ENCODE measurements at regions of chr3 and their contacts with region 1.

Region 1: GRCh38 chr3:188914552-188914951 is 257.2 kb upstream of the TPRG1 start:
- DNase-seq: peak; percentile 36
- H3K4me3 Mint-ChIP-seq: no peak overlapping the region
- H3K27ac Mint-ChIP-seq: peak overlapping the region; percentile 85
- H3K4me1 Mint-ChIP-seq: peaks cover 47% of the 10 kb centered on the region
- H3K27me3 Mint-ChIP-seq: peaks cover 2% of the 10 kb centered on the region

Region 2: DNA sequence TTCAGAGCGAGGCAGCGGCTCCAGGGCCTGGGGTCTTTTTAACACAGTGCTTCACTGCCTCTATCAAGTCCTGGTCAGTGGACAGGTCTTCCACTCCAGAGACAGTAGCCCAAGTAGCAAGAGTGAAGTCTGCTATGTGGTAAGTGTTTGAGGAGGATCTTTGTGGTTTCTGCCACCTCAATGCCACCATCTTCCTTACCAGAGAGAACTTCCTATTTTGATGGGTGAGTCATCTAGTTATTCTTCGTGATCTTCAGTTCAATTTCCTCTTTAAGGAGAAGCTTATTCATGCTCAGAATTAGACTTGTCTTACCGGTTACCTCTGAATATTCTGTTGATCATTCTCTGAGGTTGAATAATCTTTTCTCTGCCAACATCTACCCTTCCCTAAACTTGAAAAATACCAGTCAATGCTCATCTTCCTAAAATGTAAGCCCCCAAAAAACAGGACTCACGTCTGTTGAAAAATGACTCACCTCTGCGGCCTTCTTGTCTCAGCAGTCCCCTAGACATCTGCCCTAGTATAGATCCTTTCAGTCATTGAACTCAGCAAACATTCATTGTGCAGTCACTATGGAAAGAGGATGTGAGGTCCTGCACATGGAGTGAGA is 1137.1 kb before region 1 on chr3:
- CTCF ChIA-PET with region 1: no interaction called
- intact Hi-C with region 1: loop called (anchors 1 kb)
- DNase-seq: peak; percentile 76
- H3K4me3 Mint-ChIP-seq: peak overlapping the region; percentile 48
- H3K27ac Mint-ChIP-seq: peak overlapping the region; percentile 96
- H3K4me1 Mint-ChIP-seq: peaks cover 31% of the 10 kb centered on the region
- H3K27me3 Mint-ChIP-seq: no peaks in the 10 kb centered on the region

Region 3: DNA sequence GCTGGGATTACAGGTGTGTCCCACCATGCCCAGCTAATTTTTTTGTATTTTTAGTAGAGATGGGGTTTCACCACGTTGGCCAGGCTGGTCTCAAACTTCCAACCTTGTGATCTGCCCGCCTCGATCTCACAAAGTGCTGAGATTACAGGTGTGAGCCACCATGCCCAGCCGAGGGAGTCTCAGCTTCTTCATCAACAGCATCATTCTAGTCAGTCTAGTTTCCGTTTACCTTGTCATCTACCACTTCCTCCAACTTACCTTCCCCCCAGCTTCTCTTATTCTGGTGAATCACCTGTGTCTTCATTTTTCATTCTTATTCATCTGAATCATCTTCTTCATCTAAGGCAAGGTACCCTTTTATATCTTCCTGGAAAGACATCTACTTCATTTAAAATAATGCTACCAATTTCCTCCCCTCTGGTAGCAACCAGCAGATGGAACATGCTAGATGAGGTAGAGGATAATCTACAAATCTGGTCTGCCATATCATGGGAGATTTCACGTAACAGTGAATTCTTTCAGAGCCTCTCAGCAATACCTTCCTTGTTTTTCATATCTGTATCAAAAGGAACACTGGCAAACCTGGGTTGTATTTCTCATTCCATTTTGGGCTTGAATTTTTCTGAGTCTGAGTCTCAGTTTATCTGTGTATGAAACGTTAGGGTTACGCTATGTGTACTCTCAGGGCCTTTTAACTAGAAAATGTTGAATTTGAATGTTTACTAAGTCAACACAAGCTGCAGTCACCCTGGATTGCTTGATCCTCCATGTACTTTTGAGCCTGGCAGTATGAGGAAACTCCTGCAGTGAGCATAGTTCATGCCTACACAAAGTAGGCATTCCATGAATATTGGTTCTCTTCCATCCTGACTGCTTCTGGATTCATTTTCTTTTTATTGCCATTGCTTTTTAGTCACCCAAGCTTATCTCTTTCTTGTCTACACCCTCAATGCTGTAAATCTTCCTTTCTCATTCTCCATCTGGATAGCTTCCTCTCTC is 743.8 kb before region 1 on chr3:
- CTCF ChIA-PET with region 1: no interaction called
- intact Hi-C with region 1: loop called (anchors 1 kb)
- DNase-seq: peak; percentile 89
- H3K4me3 Mint-ChIP-seq: peak overlapping the region; percentile 39
- H3K27ac Mint-ChIP-seq: peak overlapping the region; percentile 86
- H3K4me1 Mint-ChIP-seq: peaks cover 64% of the 10 kb centered on the region
- H3K27me3 Mint-ChIP-seq: no peaks in the 10 kb centered on the region

Region 4: GRCh38 chr3:188339410-188340295 is 574.9 kb before region 1 on chr3:
- CTCF ChIA-PET with region 1: no interaction called
- intact Hi-C with region 1: loop called (anchors 1 kb)
- DNase-seq: peak; percentile 76
- H3K4me3 Mint-ChIP-seq: peak overlapping the region; percentile 59
- H3K27ac Mint-ChIP-seq: peak overlapping the region; percentile 92
- H3K4me1 Mint-ChIP-seq: peaks cover 34% of the 10 kb centered on the region
- H3K27me3 Mint-ChIP-seq: no peaks in the 10 kb centered on the region

Region 5: GRCh38 chr3:188700501-188700900 is 214.1 kb before region 1 on chr3:
- CTCF ChIA-PET with region 1: no interaction called
- intact Hi-C with region 1: loop called (anchors 1 kb)
- DNase-seq: peak; percentile 52
- H3K4me3 Mint-ChIP-seq: no peak overlapping the region
- H3K27ac Mint-ChIP-seq: no peak overlapping the region
- H3K4me1 Mint-ChIP-seq: peaks cover 30% of the 10 kb centered on the region
- H3K27me3 Mint-ChIP-seq: no peaks in the 10 kb centered on the region

Region 6: GRCh38 chr3:189041482-189042090 is 127.0 kb after region 1 on chr3:
- CTCF ChIA-PET with region 1: interaction called, 10 read pairs
- intact Hi-C with region 1: loop called (anchors 1 kb)
- DNase-seq: peak; percentile 90
- H3K4me3 Mint-ChIP-seq: no peak overlapping the region
- H3K27ac Mint-ChIP-seq: no peak overlapping the region
- H3K4me1 Mint-ChIP-seq: peaks cover 29% of the 10 kb centered on the region
- H3K27me3 Mint-ChIP-seq: peaks cover 3% of the 10 kb centered on the region

Region 7: DNA sequence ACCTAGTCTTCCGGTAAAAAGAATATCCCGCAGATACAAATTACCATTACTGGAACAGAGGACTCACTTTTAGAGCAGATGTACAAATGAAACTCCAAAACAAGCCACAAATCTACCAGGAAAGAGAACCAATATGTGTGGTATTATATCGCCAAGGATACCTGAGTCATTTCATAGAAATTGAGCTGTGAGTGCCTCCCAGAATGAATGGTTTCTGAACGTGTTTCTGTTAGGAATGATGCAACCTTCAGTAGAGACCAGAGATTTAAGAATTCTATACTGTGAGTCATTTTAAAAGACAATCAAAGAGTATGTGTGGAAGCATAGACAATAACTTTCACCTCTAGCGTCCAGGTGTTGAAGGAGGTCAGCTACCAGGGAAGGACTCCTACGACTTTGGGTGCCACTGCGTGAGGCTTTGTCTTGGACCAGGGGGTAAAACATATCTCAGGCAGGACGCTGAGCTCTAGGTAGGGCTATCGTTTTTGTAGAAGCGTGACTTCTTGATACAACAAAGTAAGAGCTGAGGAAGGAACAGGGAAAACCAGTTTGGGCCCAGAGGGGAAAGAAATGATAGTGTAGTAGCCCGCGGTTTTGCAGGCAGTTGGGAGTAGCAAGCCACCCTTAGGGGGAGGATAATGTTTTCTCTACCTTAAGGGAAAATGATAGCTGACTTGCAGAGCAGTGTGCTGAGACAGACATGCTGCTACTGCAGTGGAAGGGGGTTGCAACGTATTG is 927.1 kb after region 1 on chr3:
- CTCF ChIA-PET with region 1: no interaction called
- intact Hi-C with region 1: loop called (anchors 1 kb)
- DNase-seq: peak; percentile 8
- H3K4me3 Mint-ChIP-seq: no peak overlapping the region
- H3K27ac Mint-ChIP-seq: peak overlapping the region; percentile 59
- H3K4me1 Mint-ChIP-seq: peaks cover 21% of the 10 kb centered on the region
- H3K27me3 Mint-ChIP-seq: no peaks in the 10 kb centered on the region

Measured in activated naive CD4-positive, alpha-beta T cell treated with anti-CD3 and anti-CD28 coated beads for 36 hours (primary cell).